ENCODE measurements at regions of chr18 and their contacts with region 1.

Region 1: DNA sequence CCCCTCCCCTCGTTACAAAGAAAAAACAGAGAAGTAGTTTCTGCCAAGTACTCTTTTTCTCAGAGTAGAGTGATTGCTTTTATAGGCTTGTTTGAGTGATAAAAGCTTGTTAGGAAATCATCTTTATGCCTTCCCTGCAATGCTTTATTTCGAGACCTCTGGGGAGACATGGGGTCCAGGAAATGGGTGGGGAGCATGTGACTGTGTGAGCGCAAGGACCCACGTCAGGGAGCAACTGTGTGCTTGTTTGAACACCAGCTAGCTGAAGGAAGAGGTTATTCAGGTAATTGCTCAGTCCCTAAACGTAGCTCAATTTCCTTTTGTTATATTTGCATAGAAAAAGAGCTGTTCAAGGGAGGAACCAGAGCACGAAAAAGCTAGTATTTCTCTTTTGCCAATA is 187.3 kb downstream of the FAM210A start:
- DNase-seq: peak; percentile 39
- ATAC-seq: peak; percentile 70
- H3K4me3 Mint-ChIP-seq: no peak overlapping the region
- H3K27ac Mint-ChIP-seq: peak overlapping the region; percentile 79
- H3K4me1 Mint-ChIP-seq: peaks cover 61% of the 10 kb centered on the region
- H3K27me3 Mint-ChIP-seq: no peaks in the 10 kb centered on the region

Region 2: DNA sequence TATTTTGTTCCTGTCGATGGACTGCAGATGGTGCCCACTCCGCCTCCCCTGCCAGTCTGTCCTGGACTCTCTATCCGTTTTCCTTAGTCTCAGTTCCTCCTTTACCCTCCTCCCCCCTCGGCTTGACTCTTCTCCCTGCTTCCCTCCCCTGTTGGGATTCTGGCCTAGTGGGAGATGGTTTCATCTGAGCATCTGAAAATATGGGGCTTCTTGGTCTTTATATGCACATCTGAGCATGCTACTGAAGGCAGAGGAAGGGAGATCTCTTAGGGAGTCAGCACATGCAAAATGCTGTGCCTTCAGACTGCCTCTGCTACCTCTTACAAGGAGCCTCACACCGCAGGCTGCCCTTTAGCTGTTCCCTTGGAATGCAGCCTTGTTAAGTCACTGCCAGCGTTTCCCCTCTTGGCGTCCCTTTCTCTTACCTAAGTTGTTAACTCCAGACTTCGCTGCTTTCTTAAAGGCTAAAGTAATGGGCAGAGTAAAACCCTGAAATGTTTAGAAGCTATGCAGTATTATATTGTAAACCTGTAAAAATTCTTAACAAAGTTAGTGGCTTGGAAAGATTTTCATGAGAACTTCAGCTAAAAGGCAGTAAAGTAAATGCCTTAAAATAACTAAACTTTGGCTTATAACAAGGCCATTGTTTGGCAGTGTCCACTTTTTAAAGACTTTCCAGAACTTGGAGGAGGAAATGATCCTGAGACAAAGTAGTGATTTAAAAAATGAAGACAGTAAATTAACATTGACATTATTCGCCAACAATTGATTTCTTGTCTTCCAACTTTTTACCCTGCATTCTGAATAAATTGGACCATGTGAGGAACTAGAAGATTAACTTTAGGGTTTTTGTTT is 270.7 kb before region 1 on chr18:
- CTCF ChIA-PET with region 1: no interaction called
- POLR2A ChIA-PET with region 1: no interaction called
- intact Hi-C with region 1: no loop called
- DNase-seq: no peak
- ATAC-seq: no peak
- H3K4me3 Mint-ChIP-seq: peak overlapping the region; percentile 2
- H3K27ac Mint-ChIP-seq: peak overlapping the region; percentile 85
- H3K4me1 Mint-ChIP-seq: peaks cover 77% of the 10 kb centered on the region
- H3K27me3 Mint-ChIP-seq: no peaks in the 10 kb centered on the region

Region 3: GRCh38 chr18:13585379-13586153 is 46.5 kb after region 1 on chr18:
- CTCF ChIA-PET with region 1: no interaction called
- POLR2A ChIA-PET with region 1: interaction called, 14 read pairs
- intact Hi-C with region 1: no loop called
- DNase-seq: no peak
- ATAC-seq: no peak
- H3K4me3 Mint-ChIP-seq: no peak overlapping the region
- H3K27ac Mint-ChIP-seq: peak overlapping the region; percentile 35
- H3K4me1 Mint-ChIP-seq: peaks cover 56% of the 10 kb centered on the region
- H3K27me3 Mint-ChIP-seq: no peaks in the 10 kb centered on the region